ENCODE measurements at regions of chr19 and their contacts with region 1.

Region 1: GRCh38 chr19:37466798-37467607 is at the start of gene ZNF569:
- DNase-seq: peak; percentile 85
- H3K4me3 ChIP-seq: peak within 1 kb of the TSS; percentile 87
- H3K27ac ChIP-seq: peak within 1 kb of the TSS; percentile 63
- H3K27me3 ChIP-seq: no peaks in the 10 kb centered on the region
- CTCF ChIP-seq: no peak
- polyA plus RNA-seq, gene ZNF569: 3.2 and 4.0 TPM in 2 replicates

Region 2: DNA sequence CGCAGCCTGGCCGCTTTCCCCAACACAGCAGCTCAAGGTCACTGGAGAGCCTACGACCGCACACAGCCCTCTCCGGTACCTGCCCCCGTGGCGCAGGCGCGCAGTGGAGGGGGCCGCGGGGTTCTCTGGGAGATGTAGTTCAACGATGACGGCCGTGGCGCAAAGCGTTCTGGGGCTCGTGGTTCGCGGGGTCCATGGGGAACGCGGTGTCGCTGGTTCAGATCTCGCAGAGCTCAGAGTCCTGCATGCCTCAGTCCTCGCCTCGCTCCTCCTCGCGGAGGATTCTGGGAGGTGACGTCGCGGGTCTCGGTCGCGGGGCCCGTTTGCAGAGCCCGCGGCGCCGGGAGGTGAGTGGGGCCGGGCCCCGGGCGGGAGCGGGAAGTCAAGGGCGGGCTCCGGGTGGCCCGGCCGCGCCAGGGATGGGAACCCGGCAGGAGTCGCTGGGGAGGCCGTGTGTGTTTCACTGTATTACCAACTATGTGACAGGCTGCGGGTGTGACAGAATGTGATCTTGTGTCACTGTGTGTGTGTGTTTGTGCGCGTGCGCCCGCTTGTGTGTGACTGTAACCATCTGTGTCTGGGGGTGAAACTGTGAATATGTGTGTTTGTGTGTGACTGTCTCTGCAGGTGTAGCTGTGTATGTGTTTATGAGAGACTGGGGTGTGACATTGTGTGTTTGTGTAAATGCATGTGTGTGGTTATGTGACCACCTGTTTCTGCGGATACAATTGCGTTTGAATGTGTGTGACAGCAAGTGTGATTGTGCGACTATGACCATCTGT is 95.9 kb before region 1 on chr19 and contains the start of gene ZNF527:
- CTCF ChIA-PET with region 1: no interaction called
- POLR2A ChIA-PET with region 1: interaction called, 12 read pairs
- DNase-seq: peak; percentile 88
- H3K4me3 ChIP-seq: peak within 1 kb of the TSS; percentile 88
- H3K27ac ChIP-seq: peak within 1 kb of the TSS; percentile 65
- H3K27me3 ChIP-seq: no peaks in the 10 kb centered on the region
- CTCF ChIP-seq: no peak
- polyA plus RNA-seq, gene ZNF527: 3.5 and 4.0 TPM in 2 replicates

Region 3: GRCh38 chr19:37725181-37725580 is 258.2 kb after region 1 on chr19:
- CTCF ChIA-PET with region 1: no interaction called
- POLR2A ChIA-PET with region 1: no interaction called
- DNase-seq: no peak
- H3K4me3 ChIP-seq: no peak overlapping the region
- H3K27ac ChIP-seq: no peak overlapping the region
- H3K27me3 ChIP-seq: no peaks in the 10 kb centered on the region
- CTCF ChIP-seq: no peak